Dendritic cell treated with granulocyte-macrophage colony-stimulating factor and Interleukin-4, amounts not matched to agents 40 ng/mL and 50 ng/mL, for 4 days (primary cell): ENCODE measurements at regions of chr11 and their contacts with region 1.

Region 1: GRCh38 chr11:123478352-123478987 is 48.4 kb downstream of the GRAMD1B start:
- H3K4me3 Mint-ChIP-seq: peak overlapping the region; percentile 50
- H3K27ac Mint-ChIP-seq: peak overlapping the region; percentile 68
- H3K4me1 Mint-ChIP-seq: peaks cover 67% of the 10 kb centered on the region
- H3K27me3 Mint-ChIP-seq: no peaks in the 10 kb centered on the region

Region 2: GRCh38 chr11:123110356-123110755 is 368.1 kb before region 1 on chr11:
- intact Hi-C with region 1: loop called (anchors 2 kb)
- H3K4me3 Mint-ChIP-seq: no peak overlapping the region
- H3K27ac Mint-ChIP-seq: no peak overlapping the region
- H3K4me1 Mint-ChIP-seq: no peaks in the 10 kb centered on the region
- H3K27me3 Mint-ChIP-seq: peaks cover 12% of the 10 kb centered on the region

Region 3: GRCh38 chr11:123246749-123247495 is 231.5 kb before region 1 on chr11:
- intact Hi-C with region 1: loop called (anchors 5 kb)
- H3K4me3 Mint-ChIP-seq: no peak overlapping the region
- H3K27ac Mint-ChIP-seq: no peak overlapping the region
- H3K4me1 Mint-ChIP-seq: peaks cover 5% of the 10 kb centered on the region
- H3K27me3 Mint-ChIP-seq: peaks cover 12% of the 10 kb centered on the region

Region 4: DNA sequence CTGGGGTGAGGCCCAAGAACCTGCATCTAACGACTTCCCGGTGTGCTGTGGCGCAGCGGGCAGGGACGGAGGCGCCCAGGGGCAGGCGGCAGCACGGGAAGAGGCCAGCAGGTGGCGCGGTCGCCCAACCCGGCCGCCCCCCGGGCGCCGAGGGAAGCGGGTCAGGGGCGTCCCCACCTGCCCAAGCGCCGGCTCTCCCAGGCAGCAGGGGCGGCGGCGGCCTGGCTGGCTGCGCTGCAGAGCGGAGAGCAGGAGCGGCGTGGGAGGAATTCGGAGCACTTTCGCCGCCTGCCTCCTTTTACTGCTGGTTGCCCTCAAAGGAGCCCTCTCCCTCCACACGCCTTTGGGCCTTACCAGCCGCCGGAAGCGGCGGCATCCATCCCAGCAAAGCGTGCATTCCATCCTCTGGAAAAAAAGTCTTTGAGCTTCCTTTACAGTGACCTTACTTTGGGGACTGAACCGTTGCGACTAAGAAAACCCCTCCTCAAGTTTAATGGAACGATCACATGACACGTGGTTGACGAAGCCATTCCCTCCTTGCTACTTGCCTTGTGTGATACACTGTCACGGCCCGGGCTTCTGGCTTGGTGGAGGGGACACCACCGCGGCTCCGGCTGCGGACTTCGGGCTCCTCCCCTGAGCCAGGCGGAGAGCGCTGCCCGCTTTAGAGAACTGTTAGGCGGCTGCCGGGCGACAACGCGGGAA is 176.6 kb before region 1 on chr11:
- intact Hi-C with region 1: loop called (anchors 1 kb)
- H3K4me3 Mint-ChIP-seq: peak overlapping the region; percentile 77
- H3K27ac Mint-ChIP-seq: peak overlapping the region; percentile 60
- H3K4me1 Mint-ChIP-seq: peaks cover 27% of the 10 kb centered on the region
- H3K27me3 Mint-ChIP-seq: peaks cover 27% of the 10 kb centered on the region

Region 5: DNA sequence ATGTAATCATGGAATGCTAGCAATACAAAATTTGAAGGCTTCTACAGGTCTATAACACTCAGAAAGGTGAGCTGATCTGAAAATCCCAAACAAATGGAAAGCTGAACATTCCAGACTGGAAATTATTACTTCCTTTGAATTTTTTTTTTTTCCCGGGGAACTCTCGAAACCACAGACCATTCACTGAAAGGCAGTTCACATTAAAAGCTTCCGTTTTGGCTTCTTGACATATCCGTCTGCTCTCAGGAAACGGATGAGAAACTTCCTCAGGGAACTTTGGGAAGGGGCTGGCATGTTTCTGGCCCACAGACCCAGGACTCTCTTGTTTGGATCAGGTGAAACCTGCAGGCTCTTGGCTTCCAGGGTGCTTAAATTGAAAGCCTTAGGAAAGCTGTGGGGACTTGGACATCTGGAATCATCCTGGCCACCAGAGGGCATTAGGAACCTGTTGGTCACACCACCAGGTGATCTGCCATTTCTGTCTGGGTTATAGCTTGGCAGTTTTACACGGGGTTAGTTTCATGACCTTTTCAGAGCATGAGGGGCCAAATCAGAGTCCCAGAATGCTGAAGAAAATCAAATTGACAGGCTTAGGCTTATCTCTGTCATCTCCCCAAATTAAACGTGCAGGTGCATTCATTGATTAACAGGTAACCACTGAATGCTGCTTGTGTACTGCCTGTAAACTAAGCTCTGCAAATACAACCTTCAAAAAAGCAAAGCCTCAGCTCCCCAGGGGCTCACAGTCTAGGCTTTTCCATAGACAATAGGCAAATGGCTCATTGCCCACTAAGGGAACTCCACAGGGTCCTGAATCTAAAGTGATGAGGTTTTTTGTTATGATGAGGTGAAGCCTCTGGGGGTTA is 71.1 kb before region 1 on chr11:
- intact Hi-C with region 1: loop called (anchors 1 kb)
- H3K4me3 Mint-ChIP-seq: no peak overlapping the region
- H3K27ac Mint-ChIP-seq: no peak overlapping the region
- H3K4me1 Mint-ChIP-seq: peaks cover 24% of the 10 kb centered on the region
- H3K27me3 Mint-ChIP-seq: no peaks in the 10 kb centered on the region

Region 6: GRCh38 chr11:123429913-123430720 is 48.4 kb before region 1 on chr11 and contains the start of gene GRAMD1B:
- intact Hi-C with region 1: loop called (anchors 2 kb)
- H3K4me3 Mint-ChIP-seq: peak within 1 kb of the TSS; percentile 98
- H3K27ac Mint-ChIP-seq: peak within 1 kb of the TSS; percentile 90
- H3K4me1 Mint-ChIP-seq: peaks cover 51% of the 10 kb centered on the region
- H3K27me3 Mint-ChIP-seq: peaks cover 21% of the 10 kb centered on the region

Region 7: DNA sequence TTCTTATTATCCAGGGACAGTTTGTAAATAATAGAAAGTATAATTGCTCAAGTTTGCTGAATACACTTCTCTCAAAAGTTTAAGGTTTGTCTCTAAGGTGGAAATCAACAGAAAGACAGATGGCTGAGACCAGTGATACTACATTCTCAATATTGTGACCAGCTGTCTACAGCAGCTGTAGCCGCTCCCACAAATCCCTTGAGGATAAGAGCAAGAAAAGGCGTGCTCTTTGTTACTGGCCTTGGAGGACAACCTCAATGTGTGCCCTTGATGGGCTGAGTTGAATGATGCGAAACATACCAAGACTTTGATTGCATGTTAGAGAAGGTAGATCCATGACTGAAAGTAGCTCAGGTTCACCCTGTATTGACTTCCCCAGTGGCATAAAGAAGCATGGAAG is 321.6 kb after region 1 on chr11:
- intact Hi-C with region 1: no loop called
- H3K4me3 Mint-ChIP-seq: no peak overlapping the region
- H3K27ac Mint-ChIP-seq: no peak overlapping the region
- H3K4me1 Mint-ChIP-seq: no peaks in the 10 kb centered on the region
- H3K27me3 Mint-ChIP-seq: no peaks in the 10 kb centered on the region